Ascending aorta (tissue), 2 donors: ENCODE measurements at regions of chr22 and their contacts with region 1.

Region 1: GRCh38 chr22:31211862-31212730 is at the start of gene LIMK2:
- DNase-seq: peak; percentile 74 to 97
- H3K4me3 ChIP-seq: peak within 1 kb of the TSS; percentile 61 to 92
- H3K27ac ChIP-seq: peak within 1 kb of the TSS; percentile 62 to 71
- H3K4me1 ChIP-seq: peaks cover 4 to 15% of the 10 kb centered on the region in 2 donors
- H3K27me3 ChIP-seq: no peaks in the 10 kb centered on the region
- CTCF ChIP-seq: peak; percentile 81 to 90 (median 84)
- total RNA-seq, gene LIMK2: 18.4 TPM

Region 2: DNA sequence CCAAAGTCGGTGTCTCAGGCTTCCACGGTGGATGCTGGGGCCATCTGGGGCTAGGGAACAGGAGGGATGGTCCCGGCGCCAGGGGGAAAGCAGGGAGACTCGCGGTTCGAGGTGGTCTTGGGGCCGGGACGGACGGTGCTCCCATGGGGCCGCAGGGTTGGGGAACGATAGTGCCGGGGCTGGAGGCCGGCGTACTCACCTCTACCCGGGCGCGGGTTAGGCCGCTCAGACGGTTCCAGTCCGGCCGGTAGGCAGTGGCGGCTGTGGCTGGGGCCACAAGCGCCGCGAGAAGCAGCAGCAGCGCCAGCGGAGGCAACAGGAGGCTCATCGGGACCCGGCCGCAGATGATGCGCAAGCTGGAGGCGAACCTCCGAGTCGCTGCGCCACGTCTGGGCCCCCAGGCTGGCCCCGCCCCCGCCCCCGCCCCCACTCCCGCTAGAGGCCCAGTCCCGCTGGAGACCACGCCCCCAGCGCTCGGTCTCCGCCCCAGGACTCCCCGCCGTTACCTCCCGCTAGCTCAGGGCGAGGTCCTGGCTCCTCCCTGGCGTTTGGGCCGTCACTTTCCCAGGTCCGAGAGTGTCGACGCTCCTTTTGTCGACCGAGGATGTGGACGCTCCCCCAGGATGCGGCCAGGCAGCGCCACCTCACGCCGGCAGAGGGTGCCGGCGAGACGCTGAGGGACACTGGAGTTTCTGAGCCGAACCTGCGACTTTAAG is 104.8 kb before region 1 on chr22 and contains the start of gene SELENOM:
- intact Hi-C with region 1: no loop called
- DNase-seq: peak; percentile 88 to 99
- H3K4me3 ChIP-seq: peak within 1 kb of the TSS; percentile 87 to 94
- H3K27ac ChIP-seq: peak within 1 kb of the TSS; percentile 98 to 99
- H3K4me1 ChIP-seq: peaks cover 0 to 35% of the 10 kb centered on the region in 2 donors
- H3K27me3 ChIP-seq: no peaks in the 10 kb centered on the region
- CTCF ChIP-seq: peak; percentile 97 to 99 (median 98)
- total RNA-seq, gene SELENOM: 1,262 TPM

Region 3: DNA sequence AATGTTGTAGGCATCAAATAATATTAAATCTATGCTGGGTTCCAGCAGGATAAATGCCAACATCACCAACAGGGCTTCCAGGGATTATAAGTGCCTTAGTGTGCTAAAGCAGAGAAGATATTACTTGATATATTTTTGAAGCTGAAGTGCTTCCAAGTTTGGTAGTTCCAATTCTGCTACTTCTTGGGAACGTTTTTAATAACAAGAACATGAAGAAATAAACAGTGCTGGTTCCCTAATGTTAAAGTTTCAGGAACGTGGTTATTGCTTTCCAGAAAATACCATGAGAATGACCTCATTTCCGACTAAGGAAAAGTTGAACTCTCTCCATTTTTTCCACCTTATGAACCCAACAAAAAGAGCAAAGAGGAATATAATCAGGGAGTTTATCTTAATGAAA is 56.7 kb before region 1 on chr22:
- intact Hi-C with region 1: loop called (anchors 5 kb)
- DNase-seq: no peak
- H3K4me3 ChIP-seq: no peak overlapping the region
- H3K27ac ChIP-seq: peak overlapping the region; percentile 80 to 83
- H3K4me1 ChIP-seq: peaks cover 9 to 27% of the 10 kb centered on the region in 2 donors
- H3K27me3 ChIP-seq: no peaks in the 10 kb centered on the region
- CTCF ChIP-seq: no peak

Region 4: GRCh38 chr22:31230871-31231621 is 18.9 kb after region 1 on chr22:
- intact Hi-C with region 1: loop called (anchors 1 kb)
- DNase-seq: peak in 1 of 2 donors; percentile 75
- H3K4me3 ChIP-seq: no peak overlapping the region
- H3K27ac ChIP-seq: peak overlapping the region; percentile 80 to 82
- H3K4me1 ChIP-seq: peaks cover 0 to 5% of the 10 kb centered on the region in 2 donors
- H3K27me3 ChIP-seq: no peaks in the 10 kb centered on the region
- CTCF ChIP-seq: peak; percentile 68 to 82 (median 72)

Region 5: GRCh38 chr22:31272522-31273446 is 60.7 kb after region 1 on chr22:
- intact Hi-C with region 1: loop called (anchors 1 kb)
- DNase-seq: no peak
- H3K4me3 ChIP-seq: no peak overlapping the region
- H3K27ac ChIP-seq: peak overlapping the region; percentile 18 to 44
- H3K4me1 ChIP-seq: no peaks in the 10 kb centered on the region
- H3K27me3 ChIP-seq: no peaks in the 10 kb centered on the region
- CTCF ChIP-seq: peak; percentile 54 to 76 (median 70)

Region 6: DNA sequence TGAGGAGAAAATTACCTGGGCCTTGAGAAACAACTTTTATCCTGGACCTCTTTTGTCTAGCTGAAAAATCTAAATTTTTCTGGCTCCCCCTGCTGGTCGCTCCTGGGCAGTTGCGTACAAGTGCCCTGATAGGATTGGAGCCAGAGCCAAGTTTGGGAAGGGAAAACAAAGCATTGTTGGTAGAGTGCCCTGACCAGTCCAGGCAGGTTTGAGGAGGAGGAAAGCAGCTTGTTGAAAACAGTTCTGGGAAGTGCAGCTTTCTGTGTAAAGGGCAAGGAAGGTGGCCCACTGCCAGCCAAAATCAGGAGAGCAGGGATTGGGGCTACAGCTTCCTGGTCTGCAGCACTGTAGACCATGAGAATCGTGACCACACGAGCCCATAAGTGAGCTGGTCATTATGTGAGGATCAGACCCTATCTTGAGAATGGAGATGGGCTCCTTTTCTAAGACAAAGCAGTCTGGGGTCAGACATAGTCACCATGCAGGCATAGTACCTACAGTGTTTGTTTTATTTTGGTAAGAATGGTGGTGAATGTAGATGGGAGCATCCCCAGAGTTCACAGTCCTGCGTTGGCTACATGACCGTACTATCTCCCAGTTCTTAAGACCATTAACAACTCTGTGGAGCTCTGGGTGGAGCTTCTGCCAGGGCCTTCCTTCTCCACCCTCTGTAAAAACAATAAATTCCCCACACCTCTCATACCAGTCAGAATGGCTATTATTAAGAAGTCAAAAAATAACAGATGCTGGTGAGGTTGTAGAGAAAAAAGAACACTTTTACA is 101.5 kb after region 1 on chr22:
- intact Hi-C with region 1: loop called (anchors 1 kb)
- DNase-seq: peak; percentile 11 to 85
- H3K4me3 ChIP-seq: no peak overlapping the region
- H3K27ac ChIP-seq: peak overlapping the region; percentile 51 to 66
- H3K4me1 ChIP-seq: peaks cover 5 to 9% of the 10 kb centered on the region in 2 donors
- H3K27me3 ChIP-seq: no peaks in the 10 kb centered on the region
- CTCF ChIP-seq: peak; percentile 61 to 84 (median 82)